Heart right ventricle (tissue), 16 donors: ENCODE measurements at regions of chr2 and their contacts with region 1.

Region 1: DNA sequence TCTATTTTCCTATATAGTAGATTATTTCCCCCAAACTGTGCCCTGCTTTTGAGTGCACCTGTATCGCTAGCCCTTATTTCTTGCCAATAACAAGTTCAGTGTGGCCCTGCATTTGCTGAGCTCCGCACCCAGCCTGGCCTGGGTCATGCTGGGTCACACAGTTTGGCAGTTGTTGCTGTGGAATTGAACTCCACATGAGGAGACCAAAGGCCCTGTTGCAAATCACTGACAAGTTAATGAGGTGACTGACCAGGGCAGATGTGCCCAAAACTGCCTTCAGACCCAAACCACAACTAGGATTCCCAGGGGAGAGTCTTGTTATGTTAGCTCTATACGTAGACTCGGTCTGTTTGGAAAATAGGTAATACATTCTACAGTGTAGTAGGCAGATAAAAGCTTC is 31.0 kb downstream of the COL4A4 start:
- DNase-seq: peak in 1 of 2 donors; percentile 22
- ATAC-seq: peak in 1 of 8 donors; percentile 70
- H3K4me3 ChIP-seq: no peak overlapping the region
- H3K27ac ChIP-seq: peak overlapping the region in 1 of 10 donors; percentile 21
- H3K4me1 ChIP-seq: peaks cover 0 to 13% (median 0%) of the 10 kb centered on the region in 9 donors
- H3K27me3 ChIP-seq: no peaks in the 10 kb centered on the region
- CTCF ChIP-seq: no peak

Region 2: DNA sequence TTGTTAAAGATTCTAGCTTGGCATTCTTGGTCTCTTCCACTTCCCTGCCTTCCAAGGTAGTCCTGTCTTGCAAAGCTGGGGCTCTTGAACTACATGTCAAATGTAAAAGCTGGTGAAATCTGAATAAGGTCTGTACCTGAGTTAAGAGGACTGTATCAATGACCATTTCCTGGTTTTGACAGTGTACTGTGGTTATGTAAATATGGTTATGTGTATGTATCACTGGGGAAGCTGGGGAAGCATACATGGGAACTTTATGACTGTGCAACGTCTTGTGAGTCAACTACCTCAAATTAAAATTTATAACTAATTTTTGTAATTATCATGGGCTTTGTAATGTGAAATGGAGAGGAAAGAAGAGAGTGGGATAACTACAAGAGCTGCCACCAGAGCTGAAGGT is 50.7 kb before region 1 on chr2:
- intact Hi-C with region 1: no loop called
- DNase-seq: no peak
- ATAC-seq: no peak
- H3K4me3 ChIP-seq: no peak overlapping the region
- H3K27ac ChIP-seq: no peak overlapping the region
- H3K4me1 ChIP-seq: no peaks in the 10 kb centered on the region
- H3K27me3 ChIP-seq: no peaks in the 10 kb centered on the region
- CTCF ChIP-seq: no peak

Region 3: DNA sequence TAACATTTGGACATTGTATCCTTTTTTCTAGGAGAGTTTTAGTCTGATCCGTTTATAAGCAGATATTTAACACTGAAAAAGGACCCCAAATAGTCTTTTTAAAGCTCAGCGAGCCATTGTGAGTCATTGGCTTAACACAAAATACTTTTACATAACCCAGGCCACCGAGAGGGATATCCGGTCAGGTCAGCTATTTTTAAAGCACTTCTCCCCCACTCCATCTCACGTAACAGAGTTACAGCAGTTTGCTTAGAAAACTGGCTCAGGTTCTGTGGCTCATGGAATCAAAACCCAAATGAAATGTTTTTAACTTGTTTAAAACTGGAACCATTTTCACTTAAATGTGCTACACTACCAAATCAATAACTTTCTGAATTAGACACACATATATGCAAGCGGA is 55.3 kb after region 1 on chr2:
- intact Hi-C with region 1: loop called in 1 of 10 experiments (anchors 10 kb)
- DNase-seq: peak in 1 of 2 donors; percentile 72
- ATAC-seq: peak; percentile 78 to 98 (median 94)
- H3K4me3 ChIP-seq: no peak overlapping the region
- H3K27ac ChIP-seq: peak overlapping the region in 8 of 10 donors; percentile 52 to 85 (median 71)
- H3K4me1 ChIP-seq: peaks cover 0 to 38% (median 24%) of the 10 kb centered on the region in 9 donors
- H3K27me3 ChIP-seq: no peaks in the 10 kb centered on the region
- CTCF ChIP-seq: no peak

Region 4: GRCh38 chr2:227238238-227239237 is 105.6 kb after region 1 on chr2:
- intact Hi-C with region 1: loop called (anchors 1 to 2 kb)
- DNase-seq: peak; percentile 63 to 76
- ATAC-seq: peak in 3 of 8 donors; percentile 58 to 75 (median 64)
- H3K4me3 ChIP-seq: no peak overlapping the region
- H3K27ac ChIP-seq: no peak overlapping the region
- H3K4me1 ChIP-seq: no peaks in the 10 kb centered on the region
- H3K27me3 ChIP-seq: no peaks in the 10 kb centered on the region
- CTCF ChIP-seq: peak; percentile 88 to 99 (median 96)

Region 5: GRCh38 chr2:227280895-227281294 is 147.9 kb after region 1 on chr2:
- intact Hi-C with region 1: no loop called
- DNase-seq: no peak
- ATAC-seq: no peak
- H3K4me3 ChIP-seq: no peak overlapping the region
- H3K27ac ChIP-seq: no peak overlapping the region
- H3K4me1 ChIP-seq: no peaks in the 10 kb centered on the region
- H3K27me3 ChIP-seq: no peaks in the 10 kb centered on the region
- CTCF ChIP-seq: no peak

Region 6: GRCh38 chr2:227534714-227535113 is 401.7 kb after region 1 on chr2:
- intact Hi-C with region 1: no loop called
- DNase-seq: no peak
- ATAC-seq: no peak
- H3K4me3 ChIP-seq: no peak overlapping the region
- H3K27ac ChIP-seq: no peak overlapping the region
- H3K4me1 ChIP-seq: no peaks in the 10 kb centered on the region
- H3K27me3 ChIP-seq: no peaks in the 10 kb centered on the region
- CTCF ChIP-seq: no peak